ENCODE measurements at regions of chr12 and their contacts with region 1.

Region 1: GRCh38 chr12:8860165-8860961 is 37.9 kb downstream of the A2ML1 start:
- DNase-seq: peak; percentile 64
- ATAC-seq: peak; percentile 98
- H3K4me3 Mint-ChIP-seq: no peak overlapping the region
- H3K27ac Mint-ChIP-seq: no peak overlapping the region
- H3K4me1 Mint-ChIP-seq: peaks cover 11% of the 10 kb centered on the region
- H3K27me3 Mint-ChIP-seq: no peaks in the 10 kb centered on the region
- CTCF ChIP-seq: peak; percentile 70

Region 2: GRCh38 chr12:8662593-8662992 is 197.8 kb before region 1 on chr12 and contains the start of gene MFAP5:
- CTCF ChIA-PET with region 1: interaction called, 43 read pairs
- POLR2A ChIA-PET with region 1: no interaction called
- DNase-seq: no peak
- ATAC-seq: peak; percentile 29; the same call in 1 of the 2 replicates
- H3K4me3 Mint-ChIP-seq: no peak within 1 kb of the TSS
- H3K27ac Mint-ChIP-seq: no peak within 1 kb of the TSS
- H3K4me1 Mint-ChIP-seq: peaks cover 5% of the 10 kb centered on the region
- H3K27me3 Mint-ChIP-seq: no peaks in the 10 kb centered on the region
- CTCF ChIP-seq: no peak
- total RNA-seq, gene MFAP5: 0.69 to 0.96 TPM in 2 of 3 replicates, not detected in the other

Region 3: GRCh38 chr12:8828540-8829518 is 31.5 kb before region 1 on chr12:
- CTCF ChIA-PET with region 1: interaction called, 57 read pairs
- POLR2A ChIA-PET with region 1: interaction called, 5 read pairs
- DNase-seq: no peak
- ATAC-seq: peak; percentile 12
- H3K4me3 Mint-ChIP-seq: no peak overlapping the region
- H3K27ac Mint-ChIP-seq: peak overlapping the region; percentile 51
- H3K4me1 Mint-ChIP-seq: peaks cover 62% of the 10 kb centered on the region
- H3K27me3 Mint-ChIP-seq: no peaks in the 10 kb centered on the region; the same call in 1 of the 2 replicates
- CTCF ChIP-seq: no peak

Region 4: GRCh38 chr12:8844665-8845064 is 15.7 kb before region 1 on chr12:
- CTCF ChIA-PET with region 1: interaction called, 21 read pairs
- POLR2A ChIA-PET with region 1: interaction called, 3 read pairs
- DNase-seq: no peak
- ATAC-seq: no peak
- H3K4me3 Mint-ChIP-seq: no peak overlapping the region
- H3K27ac Mint-ChIP-seq: no peak overlapping the region
- H3K4me1 Mint-ChIP-seq: peaks cover 2% of the 10 kb centered on the region; the same call in 1 of the 2 replicates
- H3K27me3 Mint-ChIP-seq: no peaks in the 10 kb centered on the region; the same call in 1 of the 2 replicates
- CTCF ChIP-seq: no peak

Region 5: DNA sequence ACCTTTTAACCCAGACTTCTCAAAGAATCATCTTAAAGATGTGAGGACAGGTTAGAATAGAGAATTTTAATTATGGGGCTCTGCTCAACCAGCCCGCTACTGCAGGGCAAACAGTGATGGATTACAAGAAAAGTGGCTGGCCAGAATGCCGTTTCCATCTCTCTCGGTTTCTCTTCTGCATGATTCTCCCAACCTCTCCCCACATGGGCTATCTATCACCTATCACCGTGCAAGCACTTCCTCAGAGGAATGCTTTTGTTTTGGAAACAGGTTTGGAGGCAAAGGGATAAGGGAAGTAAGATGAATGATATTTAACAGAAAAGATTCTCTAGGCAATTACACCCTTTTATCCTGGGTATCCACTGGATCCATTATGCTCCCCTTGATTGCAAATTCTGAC is 16.5 kb after region 1 on chr12:
- CTCF ChIA-PET with region 1: interaction called, 22 read pairs
- POLR2A ChIA-PET with region 1: interaction called, 3 read pairs
- DNase-seq: no peak
- ATAC-seq: no peak
- H3K4me3 Mint-ChIP-seq: no peak overlapping the region
- H3K27ac Mint-ChIP-seq: peak overlapping the region; percentile 61
- H3K4me1 Mint-ChIP-seq: peaks cover 25% of the 10 kb centered on the region
- H3K27me3 Mint-ChIP-seq: no peaks in the 10 kb centered on the region
- CTCF ChIP-seq: no peak

Region 6: DNA sequence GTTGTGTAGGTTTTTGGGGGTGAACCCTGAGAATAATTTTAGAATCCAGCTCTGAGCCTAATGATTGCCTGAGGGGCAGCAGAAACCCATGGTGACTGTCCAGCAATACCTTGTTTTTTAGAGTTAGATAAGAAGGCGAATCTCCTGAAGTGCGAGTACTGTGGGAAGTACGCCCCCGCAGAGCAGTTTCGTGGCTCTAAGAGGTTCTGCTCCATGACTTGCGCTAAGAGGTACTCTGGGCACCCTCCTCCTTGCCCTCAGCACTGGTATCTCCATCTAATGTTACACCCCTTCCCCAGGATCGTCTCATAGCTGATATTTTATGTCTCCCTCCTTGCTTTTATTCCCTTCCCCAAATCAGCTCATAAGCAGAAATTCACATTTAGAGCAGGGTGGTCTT is 76.4 kb after region 1 on chr12:
- CTCF ChIA-PET with region 1: no interaction called
- POLR2A ChIA-PET with region 1: no interaction called
- DNase-seq: no peak
- ATAC-seq: no peak
- H3K4me3 Mint-ChIP-seq: no peak overlapping the region
- H3K27ac Mint-ChIP-seq: peak overlapping the region; percentile 64
- H3K4me1 Mint-ChIP-seq: no peaks in the 10 kb centered on the region
- H3K27me3 Mint-ChIP-seq: no peaks in the 10 kb centered on the region
- CTCF ChIP-seq: no peak

Measured in WTC11 (cell line).